ENCODE measurements at regions of chr3 and their contacts with region 1.

Region 1: DNA sequence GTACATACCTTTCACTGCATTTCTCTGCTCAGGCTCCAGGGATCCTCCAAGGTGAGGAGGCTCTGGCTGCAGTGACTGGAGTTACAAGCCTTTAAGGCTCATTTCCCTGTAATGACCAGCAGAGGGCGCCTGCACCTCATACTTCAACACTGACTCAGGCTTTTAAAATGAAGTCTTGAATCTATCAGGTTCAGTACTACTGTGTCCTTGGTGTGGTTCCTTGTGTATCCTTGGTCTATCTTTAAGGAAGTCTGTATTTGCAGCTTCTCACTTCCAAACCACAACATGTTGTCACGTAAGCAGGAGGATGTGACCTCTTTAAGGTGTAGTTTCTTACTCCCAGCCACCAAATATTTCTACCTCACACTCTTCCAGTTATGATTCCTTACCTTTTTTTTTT is 122.5 kb upstream of the ZBED2 start:
- DNase-seq: peak; percentile 77 to 90 (median 89)
- H3K4me3 ChIP-seq: no peak overlapping the region
- H3K27ac ChIP-seq: no peak overlapping the region
- H3K4me1 ChIP-seq: no peaks in the 10 kb centered on the region
- H3K27me3 ChIP-seq: no peaks in the 10 kb centered on the region

Region 2: GRCh38 chr3:111577794-111578685 is 139.6 kb before region 1 on chr3:
- CTCF ChIA-PET with region 1: interaction called, 40 read pairs
- POLR2A ChIA-PET with region 1: no interaction called
- DNase-seq: peak; percentile 71 to 83 (median 80)
- H3K4me3 ChIP-seq: no peak overlapping the region
- H3K27ac ChIP-seq: no peak overlapping the region
- H3K4me1 ChIP-seq: peaks cover 0 to 23% (median 3%) of the 10 kb centered on the region in 4 experiments
- H3K27me3 ChIP-seq: no peaks in the 10 kb centered on the region

Region 3: DNA sequence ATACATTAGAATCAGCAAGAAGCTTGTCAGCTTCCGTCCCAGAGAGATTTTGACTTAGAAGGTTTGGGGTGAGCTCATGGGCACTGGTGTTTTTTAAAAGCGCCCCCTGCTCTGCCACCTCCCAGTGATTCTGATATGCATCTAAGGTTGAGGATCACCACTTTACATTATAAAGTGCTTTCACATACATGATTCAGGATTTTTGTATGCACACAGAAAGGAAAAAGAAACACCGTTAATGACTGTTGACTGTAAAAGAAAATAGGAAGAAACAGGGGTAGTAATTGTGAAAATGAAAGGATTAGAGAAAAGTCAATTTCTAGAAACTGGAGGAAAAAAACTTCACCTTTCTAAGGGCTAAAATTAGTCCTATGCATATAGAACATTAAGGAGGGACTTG is 17.5 kb before region 1 on chr3:
- CTCF ChIA-PET with region 1: interaction called, 47 read pairs
- POLR2A ChIA-PET with region 1: no interaction called
- DNase-seq: no peak
- H3K4me3 ChIP-seq: no peak overlapping the region
- H3K27ac ChIP-seq: no peak overlapping the region
- H3K4me1 ChIP-seq: peaks cover 0 to 3% (median 0%) of the 10 kb centered on the region in 4 experiments
- H3K27me3 ChIP-seq: no peaks in the 10 kb centered on the region

Region 4: GRCh38 chr3:111895079-111895478 is 177.5 kb after region 1 on chr3:
- CTCF ChIA-PET with region 1: interaction called, 21 read pairs
- POLR2A ChIA-PET with region 1: no interaction called
- DNase-seq: peak; percentile 72 to 83 (median 81)
- H3K4me3 ChIP-seq: no peak overlapping the region
- H3K27ac ChIP-seq: no peak overlapping the region
- H3K4me1 ChIP-seq: no peaks in the 10 kb centered on the region
- H3K27me3 ChIP-seq: no peaks in the 10 kb centered on the region

Region 5: DNA sequence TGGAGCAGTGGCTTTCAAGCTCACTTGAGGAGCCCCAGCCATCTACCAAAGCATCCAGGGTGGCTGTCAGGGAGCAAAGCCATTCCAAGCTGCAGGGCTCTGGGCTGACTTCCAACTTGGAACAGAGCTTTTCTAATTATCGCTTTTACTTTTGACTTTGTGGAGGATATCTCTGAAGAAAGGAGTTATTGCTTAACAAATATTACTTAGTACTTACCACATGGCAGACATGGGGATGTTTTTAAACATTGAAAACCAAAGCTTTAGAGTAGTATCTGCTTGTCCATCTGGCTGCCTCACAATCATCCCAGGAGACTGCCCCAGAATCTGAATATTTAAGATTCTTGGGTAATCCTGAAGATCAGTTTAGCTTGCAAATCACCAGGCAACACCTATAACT is 290.0 kb after region 1 on chr3:
- CTCF ChIA-PET with region 1: interaction called, 44 read pairs
- POLR2A ChIA-PET with region 1: no interaction called
- DNase-seq: no peak
- H3K4me3 ChIP-seq: no peak overlapping the region
- H3K27ac ChIP-seq: no peak overlapping the region
- H3K4me1 ChIP-seq: peaks cover 0 to 4% (median 0%) of the 10 kb centered on the region in 4 experiments
- H3K27me3 ChIP-seq: no peaks in the 10 kb centered on the region

Region 6: GRCh38 chr3:112043603-112044201 is 326.1 kb after region 1 on chr3:
- CTCF ChIA-PET with region 1: interaction called, 12 read pairs
- POLR2A ChIA-PET with region 1: no interaction called
- DNase-seq: peak; percentile 78 to 83 (median 82)
- H3K4me3 ChIP-seq: peak overlapping the region in 2 of 7 experiments; percentile 27 to 63
- H3K27ac ChIP-seq: no peak overlapping the region
- H3K4me1 ChIP-seq: no peaks in the 10 kb centered on the region
- H3K27me3 ChIP-seq: no peaks in the 10 kb centered on the region

Measured in common myeloid progenitor, CD34-positive (primary cell).